OCI-LY7 (cell line): ENCODE measurements at regions of chr19 and their contacts with region 1.

Region 1: GRCh38 chr19:5977785-5978605 is at the start of gene RANBP3:
- DNase-seq: peak; percentile 100
- H3K4me3 ChIP-seq: peak within 1 kb of the TSS; percentile 97
- H3K27ac ChIP-seq: peak within 1 kb of the TSS; percentile 73
- H3K4me1 ChIP-seq: peaks cover 47% of the 10 kb centered on the region
- CTCF ChIP-seq: no peak
- total RNA-seq, gene RANBP3: 63.7 and 74.3 TPM in 2 replicates

Region 2: GRCh38 chr19:5827891-5828660 is 149.9 kb before region 1 on chr19:
- CTCF ChIA-PET with region 1: no interaction called
- POLR2A ChIA-PET with region 1: interaction called, 11 read pairs
- intact Hi-C with region 1: no loop called
- DNase-seq: peak; percentile 95
- H3K4me3 ChIP-seq: peak overlapping the region; percentile 72
- H3K27ac ChIP-seq: peak overlapping the region; percentile 91
- H3K4me1 ChIP-seq: peaks cover 37% of the 10 kb centered on the region
- CTCF ChIP-seq: no peak

Region 3: DNA sequence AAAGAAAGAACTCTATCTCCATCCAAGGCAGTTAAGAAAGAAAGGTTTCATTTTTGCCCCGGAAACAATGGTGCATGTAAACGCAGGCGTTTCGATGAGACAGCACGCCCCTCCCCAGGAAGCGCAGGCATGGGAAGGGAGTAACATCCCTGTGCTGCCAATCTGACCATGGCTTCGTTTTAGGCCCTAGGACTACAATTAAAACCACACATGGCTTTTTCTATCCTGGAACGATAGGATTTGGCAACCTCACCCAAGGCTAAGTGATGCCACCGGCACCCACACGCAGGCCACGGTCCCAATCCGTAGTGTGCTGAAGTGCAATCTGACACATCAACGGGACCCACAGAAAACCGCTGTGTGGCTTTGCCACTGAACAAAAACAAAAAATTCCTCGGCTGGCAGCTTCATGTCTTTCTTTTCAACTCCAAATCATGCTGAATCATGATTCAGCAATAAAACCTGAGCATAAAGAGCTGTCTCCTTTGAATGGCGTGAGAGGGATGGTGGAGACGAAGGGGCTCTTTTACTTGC is 24.2 kb before region 1 on chr19:
- CTCF ChIA-PET with region 1: no interaction called
- POLR2A ChIA-PET with region 1: interaction called, 7 read pairs
- intact Hi-C with region 1: loop called (anchors 2 kb)
- DNase-seq: no peak
- H3K4me3 ChIP-seq: no peak overlapping the region
- H3K27ac ChIP-seq: peak overlapping the region; percentile 96
- H3K4me1 ChIP-seq: peaks cover 81% of the 10 kb centered on the region
- CTCF ChIP-seq: no peak

Region 4: GRCh38 chr19:6014551-6015135 is 36.6 kb after region 1 on chr19:
- CTCF ChIA-PET with region 1: no interaction called
- POLR2A ChIA-PET with region 1: no interaction called
- intact Hi-C with region 1: no loop called
- DNase-seq: no peak
- H3K4me3 ChIP-seq: no peak overlapping the region
- H3K27ac ChIP-seq: no peak overlapping the region
- H3K4me1 ChIP-seq: no peaks in the 10 kb centered on the region
- CTCF ChIP-seq: no peak

Region 5: DNA sequence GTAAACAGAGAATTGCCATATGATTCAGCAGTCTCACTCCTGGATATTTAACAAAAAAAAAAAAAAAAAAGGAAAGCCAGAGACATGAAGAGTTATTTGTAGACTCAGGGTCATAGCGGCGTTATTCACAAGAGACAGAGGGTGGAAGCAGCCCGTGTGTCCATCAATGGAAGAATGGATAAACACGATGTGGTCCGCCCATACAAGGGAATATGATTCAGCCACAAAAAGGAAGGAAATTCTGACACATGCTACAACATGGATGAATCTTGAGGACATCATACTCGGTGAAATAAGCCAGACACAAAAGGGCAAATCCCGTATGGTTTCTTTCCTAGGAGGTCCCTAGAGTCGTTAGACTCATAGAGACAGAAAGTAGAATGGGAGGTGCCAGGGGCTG is 172.3 kb after region 1 on chr19:
- CTCF ChIA-PET with region 1: no interaction called
- POLR2A ChIA-PET with region 1: no interaction called
- intact Hi-C with region 1: no loop called
- DNase-seq: no peak
- H3K4me3 ChIP-seq: no peak overlapping the region
- H3K27ac ChIP-seq: no peak overlapping the region
- H3K4me1 ChIP-seq: no peaks in the 10 kb centered on the region
- CTCF ChIP-seq: no peak